ENCODE measurements at regions of chr10 and their contacts with region 1.

Region 1: DNA sequence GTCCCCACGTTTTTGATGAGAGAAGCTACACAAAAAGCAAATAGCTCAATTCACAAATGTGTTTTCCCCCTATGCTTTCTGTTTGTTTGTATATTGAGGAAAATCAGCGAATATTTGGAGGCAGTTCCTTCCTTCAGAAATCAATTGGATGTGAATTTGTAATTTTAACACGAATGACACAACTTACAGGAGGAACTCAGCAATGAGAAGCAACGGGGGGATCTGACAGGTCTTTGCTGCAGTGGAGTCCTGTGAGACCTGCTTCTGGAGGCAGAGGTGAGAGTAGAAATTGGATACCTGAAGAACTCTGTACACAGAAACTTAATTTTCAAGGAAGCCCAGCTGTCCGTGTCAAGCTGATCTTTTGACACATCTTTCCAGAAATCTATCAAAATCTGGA is 370.4 kb downstream of the GFRA1 start:
- DNase-seq: no peak
- H3K4me3 ChIP-seq: no peak overlapping the region
- H3K27ac ChIP-seq: no peak overlapping the region
- H3K4me1 ChIP-seq: no peaks in the 10 kb centered on the region
- H3K27me3 ChIP-seq: no peaks in the 10 kb centered on the region
- CTCF ChIP-seq: no peak
- POLR2A ChIP-seq: no peak

Region 2: DNA sequence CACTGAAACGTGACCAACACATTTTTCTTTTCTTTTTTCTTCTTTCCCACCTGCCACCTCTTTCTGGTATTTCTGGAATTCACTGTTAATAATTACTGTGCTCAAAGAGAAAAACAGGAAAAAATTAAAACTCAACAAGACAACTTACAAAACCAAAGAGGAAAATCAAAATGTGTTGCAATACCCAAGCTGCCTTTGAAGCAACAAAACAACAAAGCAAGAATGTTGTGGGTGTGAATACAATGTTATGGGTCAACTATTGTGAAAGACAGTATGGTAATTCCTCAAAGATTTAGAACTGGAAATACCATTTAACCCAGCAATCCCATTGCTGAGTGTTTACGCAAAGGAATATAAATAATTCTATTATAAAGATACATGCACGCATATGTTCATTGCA is 44.7 kb before region 1 on chr10:
- CTCF ChIA-PET with region 1: no interaction called
- POLR2A ChIA-PET with region 1: no interaction called
- dilution Hi-C with region 1: no loop called
- intact Hi-C with region 1: loop called (anchors 1 kb)
- DNase-seq: no peak
- H3K4me3 ChIP-seq: no peak overlapping the region
- H3K27ac ChIP-seq: no peak overlapping the region
- H3K4me1 ChIP-seq: no peaks in the 10 kb centered on the region
- H3K27me3 ChIP-seq: no peaks in the 10 kb centered on the region
- CTCF ChIP-seq: no peak
- POLR2A ChIP-seq: no peak

Region 3: DNA sequence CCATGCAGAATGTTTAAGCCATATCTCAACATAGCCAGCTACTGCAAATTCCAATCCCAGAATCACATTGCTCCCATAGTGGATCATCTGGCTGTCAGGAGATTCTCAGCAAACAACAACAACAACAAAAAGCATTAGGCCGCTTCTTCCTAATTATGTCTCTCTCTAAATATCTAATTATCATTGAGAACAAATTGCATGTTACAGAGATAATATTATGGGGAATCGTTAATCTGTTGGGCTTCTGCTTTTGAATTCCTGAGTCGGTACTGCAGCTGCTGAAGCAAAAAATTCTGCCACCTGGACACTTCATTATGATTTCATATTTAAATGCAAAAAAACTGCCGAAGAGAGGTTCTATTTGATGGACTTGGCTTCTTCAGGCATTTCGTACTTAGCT is 18.3 kb before region 1 on chr10:
- CTCF ChIA-PET with region 1: no interaction called
- POLR2A ChIA-PET with region 1: no interaction called
- dilution Hi-C with region 1: no loop called
- intact Hi-C with region 1: no loop called
- DNase-seq: no peak
- H3K4me3 ChIP-seq: no peak overlapping the region
- H3K27ac ChIP-seq: no peak overlapping the region
- H3K4me1 ChIP-seq: no peaks in the 10 kb centered on the region
- H3K27me3 ChIP-seq: no peaks in the 10 kb centered on the region
- CTCF ChIP-seq: no peak
- POLR2A ChIP-seq: no peak

Measured in endothelial cell of umbilical vein (primary cell).